Right ventricle myocardium inferior (tissue), 1 donor: ENCODE measurements at regions of chr9 and their contacts with region 1.

Region 1: DNA sequence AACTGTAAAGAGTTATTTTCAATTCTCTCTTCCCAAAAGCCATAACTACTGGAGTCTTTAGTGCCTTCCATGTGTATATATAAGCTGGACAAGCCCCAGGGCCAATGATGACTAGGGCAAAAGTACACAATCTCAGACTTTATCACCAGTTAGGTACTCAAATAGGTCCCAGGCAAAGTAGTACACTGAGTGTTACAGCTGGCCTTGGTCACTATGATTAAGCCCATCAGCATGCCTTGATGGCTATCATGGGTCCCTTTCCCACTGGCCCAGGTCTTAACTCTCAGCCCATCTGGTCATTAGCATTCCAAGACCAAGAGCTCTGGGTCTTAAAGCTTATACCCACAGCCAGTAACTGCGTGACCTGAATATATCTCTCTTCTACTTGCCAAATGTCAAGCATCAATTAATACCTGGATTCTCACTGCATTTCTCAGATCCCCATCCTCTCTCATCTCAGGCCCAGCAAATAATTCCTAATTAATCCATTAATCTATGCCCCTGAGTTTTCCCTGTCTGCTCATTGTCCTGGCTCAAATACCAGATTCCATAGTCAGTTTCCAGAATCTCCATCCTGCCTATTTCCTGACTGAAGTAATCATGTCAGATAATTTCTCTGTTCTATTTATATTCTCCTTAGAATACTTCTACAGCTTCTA is 62.3 kb downstream of the NR6A1 start:
- DNase-seq: no peak
- ATAC-seq: no peak

Region 2: DNA sequence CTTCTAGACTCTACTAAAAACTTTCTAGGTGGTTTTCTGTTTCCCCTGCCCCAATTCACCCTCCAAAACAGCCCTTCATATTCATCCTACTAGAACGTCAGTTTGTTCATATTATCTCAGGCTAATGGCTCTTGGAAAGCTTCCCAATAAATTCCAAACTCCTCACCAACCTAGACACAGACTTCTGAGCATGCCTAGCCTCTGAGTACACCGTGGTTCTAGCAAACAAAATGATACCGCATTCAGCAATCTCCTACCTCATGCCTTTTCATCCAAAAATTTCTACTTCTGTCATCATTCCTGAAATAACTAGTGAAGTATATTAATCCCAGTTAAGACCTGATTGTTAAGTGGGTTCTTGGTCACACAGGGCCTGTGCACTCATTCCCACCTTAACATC is 155.0 kb before region 1 on chr9:
- intact Hi-C with region 1: loop called (anchors 1 kb)
- DNase-seq: no peak
- ATAC-seq: no peak

Region 3: GRCh38 chr9:124617471-124618141 is 91.2 kb before region 1 on chr9:
- intact Hi-C with region 1: loop called (anchors 1 kb)
- DNase-seq: peak; percentile 76
- ATAC-seq: peak; percentile 71